ENCODE measurements at regions of chr21 and their contacts with region 1.

Region 1: DNA sequence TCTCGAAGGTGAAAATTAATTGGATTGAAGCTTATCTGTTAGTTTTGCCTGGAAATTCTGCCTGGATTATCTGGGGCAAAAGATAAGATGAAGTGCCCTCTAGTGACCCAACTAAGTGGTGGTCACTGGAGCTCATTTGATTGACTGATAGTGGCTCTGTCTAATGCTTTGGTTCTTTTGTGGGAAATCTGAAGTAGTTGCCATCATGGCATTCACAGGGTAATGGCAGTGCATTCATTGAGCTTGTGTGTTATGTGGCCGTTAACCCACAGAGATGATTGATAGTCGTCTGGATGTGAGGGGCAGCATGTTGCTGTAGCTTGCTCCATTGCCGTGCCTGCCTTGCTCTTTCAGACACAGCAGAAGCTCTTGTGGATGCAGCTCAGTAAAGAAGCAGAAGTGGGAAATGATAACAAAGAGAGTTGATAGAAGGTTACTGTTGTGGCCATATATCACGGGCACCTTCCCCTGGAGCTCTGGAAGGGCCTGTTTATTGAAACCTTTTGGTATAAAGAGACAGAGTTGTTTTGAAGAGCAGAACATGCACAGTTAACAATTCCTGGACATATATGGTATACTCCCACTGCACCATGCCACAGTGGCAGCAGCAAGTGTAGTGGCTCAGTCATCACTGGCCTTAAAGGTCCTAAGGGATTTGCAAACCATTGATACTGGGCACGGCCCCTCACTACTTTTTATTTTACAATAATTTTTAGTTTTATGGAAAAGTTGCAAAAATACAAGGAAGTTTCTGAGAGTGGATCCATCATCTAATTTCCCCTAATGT is 42.0 kb downstream of the CXADR start:
- DNase-seq: no peak
- H3K4me3 ChIP-seq: no peak overlapping the region
- H3K27ac ChIP-seq: no peak overlapping the region
- H3K27me3 ChIP-seq: no peaks in the 10 kb centered on the region
- CTCF ChIP-seq: peak; percentile 43

Region 2: GRCh38 chr21:17387030-17387617 is 167.7 kb before region 1 on chr21:
- in situ Hi-C with region 1: loop called (anchors 25 kb)
- DNase-seq: peak; percentile 53
- H3K4me3 ChIP-seq: no peak overlapping the region
- H3K27ac ChIP-seq: no peak overlapping the region
- H3K27me3 ChIP-seq: no peaks in the 10 kb centered on the region
- CTCF ChIP-seq: peak; percentile 54

Region 3: GRCh38 chr21:17590430-17590829 is 35.6 kb after region 1 on chr21:
- in situ Hi-C with region 1: no loop called
- DNase-seq: no peak
- H3K4me3 ChIP-seq: no peak overlapping the region
- H3K27ac ChIP-seq: no peak overlapping the region
- H3K27me3 ChIP-seq: no peaks in the 10 kb centered on the region
- CTCF ChIP-seq: no peak

Region 4: GRCh38 chr21:17725339-17725738 is 170.5 kb after region 1 on chr21:
- in situ Hi-C with region 1: no loop called
- DNase-seq: no peak
- H3K4me3 ChIP-seq: no peak overlapping the region
- H3K27ac ChIP-seq: no peak overlapping the region
- H3K27me3 ChIP-seq: no peaks in the 10 kb centered on the region
- CTCF ChIP-seq: no peak